ENCODE measurements at regions of chr12 and their contacts with region 1.

Region 1: DNA sequence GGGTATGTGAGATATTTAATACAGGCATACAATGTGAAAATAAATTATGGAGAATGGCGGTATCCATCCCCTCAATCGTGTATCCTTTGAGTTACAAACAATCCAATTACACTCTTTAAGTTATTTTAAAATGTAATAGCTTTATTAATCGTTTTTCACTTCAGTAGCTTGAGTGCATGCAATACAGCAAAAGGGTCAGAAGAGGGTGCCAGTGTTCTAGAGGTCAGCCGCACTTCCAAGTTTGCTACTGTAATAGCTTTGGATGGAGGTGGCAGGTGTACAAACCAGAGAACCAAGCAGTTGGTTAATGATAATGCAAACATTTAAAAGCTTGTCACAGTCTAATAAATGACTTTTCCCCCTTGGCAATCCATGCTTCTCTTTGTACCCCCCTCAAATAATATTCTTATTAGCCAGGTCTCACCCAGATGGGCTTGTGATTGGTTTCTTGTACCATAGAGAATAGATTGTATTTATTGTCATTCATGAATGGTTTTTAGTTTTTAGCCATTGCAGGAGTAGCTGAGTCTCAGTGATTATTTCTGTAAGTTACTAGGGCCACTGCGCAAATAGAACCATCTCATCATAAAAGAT is 127.0 kb downstream of the ERC1 start:
- DNase-seq: peak; percentile 73 to 75
- H3K4me3 ChIP-seq: no peak overlapping the region
- H3K27ac ChIP-seq: no peak overlapping the region
- H3K4me1 ChIP-seq: peaks cover 0 to 16% of the 10 kb centered on the region in 2 donors
- H3K27me3 ChIP-seq: no peaks in the 10 kb centered on the region
- CTCF ChIP-seq: peak; percentile 82 to 96 (median 94)
- POLR2A ChIP-seq: no peak

Region 2: GRCh38 chr12:1533602-1534304 is 415.7 kb after region 1 on chr12:
- intact Hi-C with region 1: no loop called
- DNase-seq: no peak
- H3K4me3 ChIP-seq: no peak overlapping the region
- H3K27ac ChIP-seq: no peak overlapping the region
- H3K4me1 ChIP-seq: peaks cover 0 to 13% of the 10 kb centered on the region in 2 donors
- H3K27me3 ChIP-seq: peaks cover 3% of the 10 kb centered on the region
- CTCF ChIP-seq: no peak
- POLR2A ChIP-seq: no peak

Region 3: GRCh38 chr12:1583421-1584078 is 465.5 kb after region 1 on chr12:
- intact Hi-C with region 1: loop called (anchors 5 kb)
- DNase-seq: peak; percentile 60 to 70
- H3K4me3 ChIP-seq: no peak overlapping the region
- H3K27ac ChIP-seq: no peak overlapping the region
- H3K4me1 ChIP-seq: peaks cover 7 to 10% of the 10 kb centered on the region in 2 donors
- H3K27me3 ChIP-seq: no peaks in the 10 kb centered on the region
- CTCF ChIP-seq: peak; percentile 73 to 93 (median 85)
- POLR2A ChIP-seq: no peak

Measured in thyroid gland (tissue), 4 donors.